CD4-positive, alpha-beta memory T cell (primary cell): ENCODE measurements at regions of chr6 and their contacts with region 1.

Region 1: GRCh38 chr6:30326526-30327260 is at the start of gene TRIM39:
- DNase-seq: peak; percentile 91 to 94 (median 92)
- H3K4me3 ChIP-seq: peak within 1 kb of the TSS; percentile 68 to 82
- H3K4me3 Mint-ChIP-seq: peak within 1 kb of the TSS; percentile 92 to 98 (median 94)
- H3K27ac ChIP-seq: peak within 1 kb of the TSS; percentile 99
- H3K27ac Mint-ChIP-seq: peak within 1 kb of the TSS; percentile 97 to 100 (median 100)
- H3K4me1 ChIP-seq: peaks cover 53% of the 10 kb centered on the region
- H3K4me1 Mint-ChIP-seq: peaks cover 41 to 69% (median 56%) of the 10 kb centered on the region in 4 donors
- H3K27me3 ChIP-seq: no peaks in the 10 kb centered on the region
- H3K27me3 Mint-ChIP-seq: no peaks in the 10 kb centered on the region
- total RNA-seq, gene TRIM39: 27.7 to 30.9 TPM

Region 2: DNA sequence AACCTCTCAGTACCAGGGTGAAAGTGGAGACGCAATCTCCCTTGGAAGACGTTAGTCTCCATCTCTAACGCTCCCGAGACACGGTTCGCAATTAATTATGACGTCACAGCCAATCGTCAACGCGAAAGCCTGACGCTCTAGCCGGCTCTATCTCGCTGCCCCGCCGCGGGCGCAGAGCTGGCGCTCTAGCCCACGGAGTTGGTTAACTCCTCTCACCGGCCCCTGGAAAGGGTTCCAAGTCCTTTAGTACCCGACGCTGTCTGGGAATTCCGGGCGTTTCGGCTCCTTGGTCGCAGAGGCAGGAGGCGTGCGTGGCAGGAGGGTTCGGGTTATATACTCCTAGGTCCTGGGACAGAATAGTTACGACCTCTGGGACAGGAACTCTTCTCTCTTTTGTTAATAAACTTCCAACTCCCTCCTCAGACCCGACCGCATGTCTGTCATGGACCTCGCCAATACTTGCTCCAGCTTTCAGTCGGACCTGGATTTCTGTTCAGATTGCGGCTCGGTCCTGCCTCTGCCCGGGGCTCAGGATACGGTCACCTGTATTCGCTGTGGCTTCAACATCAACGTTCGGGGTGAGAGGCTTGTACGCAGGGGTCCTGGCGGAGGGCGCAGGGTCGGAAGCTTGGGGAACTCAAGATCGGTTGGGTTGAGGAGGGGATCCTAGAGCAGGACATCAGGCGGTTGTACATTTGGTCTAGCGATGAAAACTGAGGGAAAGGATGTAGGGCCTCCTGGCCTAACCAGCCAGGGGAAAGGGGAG is 265.4 kb before region 1 on chr6 and contains the start of gene POLR1H:
- CTCF ChIA-PET with region 1: no interaction called
- POLR2A ChIA-PET with region 1: interaction called, 12 read pairs
- intact Hi-C with region 1: loop called (anchors 2 kb)
- DNase-seq: peak; percentile 87 to 93 (median 88)
- H3K4me3 ChIP-seq: peak within 1 kb of the TSS; percentile 62 to 96
- H3K4me3 Mint-ChIP-seq: peak within 1 kb of the TSS; percentile 96 to 99 (median 98)
- H3K27ac ChIP-seq: peak within 1 kb of the TSS; percentile 92
- H3K27ac Mint-ChIP-seq: peak within 1 kb of the TSS; percentile 97 to 100 (median 99)
- H3K4me1 ChIP-seq: peaks cover 41% of the 10 kb centered on the region
- H3K4me1 Mint-ChIP-seq: peaks cover 16 to 49% (median 29%) of the 10 kb centered on the region in 4 donors
- H3K27me3 ChIP-seq: no peaks in the 10 kb centered on the region
- H3K27me3 Mint-ChIP-seq: no peaks in the 10 kb centered on the region
- total RNA-seq, gene POLR1H: 47.2 to 50.0 TPM

Region 3: DNA sequence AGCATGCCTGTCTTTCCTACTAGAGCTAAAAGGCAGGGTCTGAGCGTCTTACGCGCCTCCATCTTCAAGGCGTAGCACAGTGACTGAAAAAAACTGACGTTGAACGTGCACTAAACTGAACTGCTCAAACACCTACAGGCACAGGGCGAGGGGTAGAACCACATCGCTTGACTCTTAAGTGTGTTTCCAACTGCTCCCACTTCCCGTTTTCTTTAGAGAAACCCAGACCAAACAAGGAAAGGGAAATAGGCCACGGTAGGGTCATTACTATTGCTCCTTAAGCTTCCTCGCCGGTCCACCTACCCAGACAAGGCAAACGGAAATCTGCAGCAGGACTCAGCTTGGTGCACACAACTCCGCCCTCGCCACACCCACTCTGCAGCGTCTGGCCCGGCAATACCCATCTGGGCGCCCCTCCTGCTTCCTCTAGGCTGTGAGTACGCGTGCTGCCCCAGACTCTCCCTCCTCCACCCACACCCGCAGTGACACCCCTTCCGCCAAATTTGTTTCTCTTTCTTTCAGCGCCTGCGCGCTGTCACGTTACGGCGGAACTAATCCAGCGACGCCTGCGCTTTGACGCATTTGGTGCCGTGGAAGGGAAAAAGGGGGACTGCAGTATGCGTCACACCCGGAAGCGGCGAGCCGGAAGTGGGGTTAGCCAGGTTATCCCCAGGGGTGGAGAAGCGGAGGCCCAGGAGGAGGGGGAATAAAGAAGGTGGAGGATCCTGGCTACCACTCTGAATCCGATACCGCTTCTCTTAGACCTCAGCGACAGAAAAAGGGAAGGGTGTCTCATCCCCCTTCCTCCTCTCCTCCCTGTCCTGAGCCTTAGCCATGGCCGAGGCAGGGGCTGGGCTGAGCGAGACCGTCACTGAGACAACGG is 259.9 kb before region 1 on chr6 and contains the start of gene PPP1R11:
- CTCF ChIA-PET with region 1: no interaction called
- POLR2A ChIA-PET with region 1: interaction called, 12 read pairs
- intact Hi-C with region 1: loop called (anchors 2 kb)
- DNase-seq: peak; percentile 98 to 100 (median 99)
- H3K4me3 ChIP-seq: peak within 1 kb of the TSS; percentile 84 to 90
- H3K4me3 Mint-ChIP-seq: peak within 1 kb of the TSS; percentile 92 to 100 (median 97)
- H3K27ac ChIP-seq: peak within 1 kb of the TSS; percentile 99
- H3K27ac Mint-ChIP-seq: peak within 1 kb of the TSS; percentile 95 to 100 (median 99)
- H3K4me1 ChIP-seq: peaks cover 50% of the 10 kb centered on the region
- H3K4me1 Mint-ChIP-seq: peaks cover 35 to 75% (median 52%) of the 10 kb centered on the region in 4 donors
- H3K27me3 ChIP-seq: no peaks in the 10 kb centered on the region
- H3K27me3 Mint-ChIP-seq: peaks cover 4 to 6% of the 10 kb centered on the region in 2 donors
- total RNA-seq, gene PPP1R11: 65.2 to 66.2 TPM

Region 4: GRCh38 chr6:30259140-30260035 is 67.3 kb before region 1 on chr6:
- CTCF ChIA-PET with region 1: no interaction called
- POLR2A ChIA-PET with region 1: no interaction called
- intact Hi-C with region 1: loop called (anchors 2 kb)
- DNase-seq: peak; percentile 49 to 73 (median 57)
- H3K4me3 ChIP-seq: peak overlapping the region; percentile 31 to 79
- H3K4me3 Mint-ChIP-seq: peak overlapping the region; percentile 86 to 97 (median 92)
- H3K27ac ChIP-seq: peak overlapping the region; percentile 60
- H3K27ac Mint-ChIP-seq: peak overlapping the region; percentile 70 to 93 (median 88)
- H3K4me1 ChIP-seq: peaks cover 7% of the 10 kb centered on the region
- H3K4me1 Mint-ChIP-seq: peaks cover 7 to 17% (median 10%) of the 10 kb centered on the region in 4 donors
- H3K27me3 ChIP-seq: no peaks in the 10 kb centered on the region
- H3K27me3 Mint-ChIP-seq: peaks cover 0 to 3% of the 10 kb centered on the region in 2 donors

Region 5: DNA sequence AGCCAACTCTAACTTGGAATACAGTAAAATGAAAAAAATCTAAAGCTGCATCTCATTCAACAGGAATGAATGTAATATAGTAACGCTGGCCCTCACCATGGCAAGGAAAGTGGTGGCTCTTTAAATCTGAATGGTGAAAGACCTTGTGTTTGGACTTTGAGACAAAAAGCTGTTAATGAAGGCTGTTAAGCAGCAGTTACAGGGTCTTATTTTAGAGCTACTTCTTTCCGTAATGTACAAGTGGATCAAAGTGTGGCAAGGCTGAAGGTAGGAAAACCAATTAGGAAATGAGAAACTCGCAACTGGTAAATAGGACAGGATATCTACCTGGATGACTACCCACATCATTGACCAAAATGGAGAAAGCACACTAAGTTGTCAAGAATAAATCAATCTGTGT is 11.5 kb before region 1 on chr6:
- CTCF ChIA-PET with region 1: interaction called, 5 read pairs
- POLR2A ChIA-PET with region 1: interaction called, 16 read pairs
- intact Hi-C with region 1: no loop called
- DNase-seq: no peak
- H3K4me3 ChIP-seq: no peak overlapping the region
- H3K4me3 Mint-ChIP-seq: no peak overlapping the region
- H3K27ac ChIP-seq: no peak overlapping the region
- H3K27ac Mint-ChIP-seq: no peak overlapping the region
- H3K4me1 ChIP-seq: peaks cover 31% of the 10 kb centered on the region
- H3K4me1 Mint-ChIP-seq: peaks cover 26 to 73% (median 57%) of the 10 kb centered on the region in 4 donors
- H3K27me3 ChIP-seq: no peaks in the 10 kb centered on the region
- H3K27me3 Mint-ChIP-seq: no peaks in the 10 kb centered on the region

Region 6: DNA sequence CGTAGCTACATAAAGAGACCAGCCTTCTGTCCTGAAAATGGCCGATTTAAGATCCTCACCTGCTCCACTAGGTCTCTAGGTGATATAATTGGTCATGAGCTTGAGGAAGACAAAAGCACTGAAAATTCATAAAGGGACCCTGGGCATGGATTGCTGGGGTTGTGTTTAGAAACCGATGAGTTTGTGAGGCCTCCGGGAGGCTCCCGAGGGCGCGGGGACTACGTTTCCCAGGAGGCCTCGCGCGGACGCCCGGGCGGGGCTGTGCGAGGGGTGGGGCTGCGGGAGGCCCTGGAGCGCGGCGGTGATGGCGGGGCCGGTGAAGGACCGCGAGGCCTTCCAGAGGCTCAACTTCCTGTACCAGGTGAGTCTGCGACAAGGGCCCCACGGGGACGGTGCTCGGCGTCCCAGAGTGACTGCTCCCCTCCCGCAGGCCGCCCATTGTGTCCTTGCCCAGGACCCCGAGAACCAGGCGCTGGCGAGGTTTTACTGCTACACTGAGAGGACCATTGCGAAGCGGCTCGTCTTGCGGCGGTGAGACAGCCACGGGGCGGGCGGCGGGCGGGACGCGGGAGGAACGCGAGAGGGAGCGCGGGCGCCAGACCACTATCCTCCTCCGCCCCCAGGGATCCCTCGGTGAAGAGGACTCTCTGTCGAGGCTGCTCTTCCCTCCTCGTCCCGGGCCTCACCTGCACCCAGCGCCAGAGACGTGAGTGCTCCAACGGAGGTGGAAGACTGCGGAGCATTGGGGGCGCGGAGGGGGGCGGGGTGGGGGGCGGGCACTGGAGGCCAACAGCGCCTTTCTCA is 18.4 kb after region 1 on chr6 and contains the start of gene RPP21:
- CTCF ChIA-PET with region 1: no interaction called
- POLR2A ChIA-PET with region 1: interaction called, 19 read pairs
- intact Hi-C with region 1: loop called (anchors 1 kb)
- DNase-seq: peak; percentile 82 to 87 (median 85)
- H3K4me3 ChIP-seq: peak within 1 kb of the TSS; percentile 59 to 78
- H3K4me3 Mint-ChIP-seq: peak within 1 kb of the TSS; percentile 87 to 95 (median 92)
- H3K27ac ChIP-seq: peak within 1 kb of the TSS; percentile 87
- H3K27ac Mint-ChIP-seq: peak within 1 kb of the TSS; percentile 77 to 98 (median 96)
- H3K4me1 ChIP-seq: peaks cover 20% of the 10 kb centered on the region
- H3K4me1 Mint-ChIP-seq: peaks cover 22 to 42% (median 25%) of the 10 kb centered on the region in 4 donors
- H3K27me3 ChIP-seq: no peaks in the 10 kb centered on the region
- H3K27me3 Mint-ChIP-seq: peaks cover 0 to 2% of the 10 kb centered on the region in 2 donors
- total RNA-seq, gene RPP21: 51.6 to 57.6 TPM

Region 7: GRCh38 chr6:30626484-30627366 is 300.0 kb after region 1 on chr6 and contains the start of gene ATAT1:
- CTCF ChIA-PET with region 1: no interaction called
- POLR2A ChIA-PET with region 1: no interaction called
- intact Hi-C with region 1: no loop called
- DNase-seq: peak; percentile 85 to 94 (median 86)
- H3K4me3 ChIP-seq: peak within 1 kb of the TSS; percentile 5 to 78
- H3K4me3 Mint-ChIP-seq: peak within 1 kb of the TSS; percentile 91 to 95 (median 92)
- H3K27ac ChIP-seq: peak within 1 kb of the TSS; percentile 89
- H3K27ac Mint-ChIP-seq: peak within 1 kb of the TSS; percentile 91 to 99 (median 97)
- H3K4me1 ChIP-seq: peaks cover 14% of the 10 kb centered on the region
- H3K4me1 Mint-ChIP-seq: peaks cover 18 to 30% (median 24%) of the 10 kb centered on the region in 4 donors
- H3K27me3 ChIP-seq: no peaks in the 10 kb centered on the region
- H3K27me3 Mint-ChIP-seq: no peaks in the 10 kb centered on the region
- total RNA-seq, gene ATAT1: 8.3 to 9.4 TPM